ENCODE measurements at regions of chr5 and their contacts with region 1.

Region 1: DNA sequence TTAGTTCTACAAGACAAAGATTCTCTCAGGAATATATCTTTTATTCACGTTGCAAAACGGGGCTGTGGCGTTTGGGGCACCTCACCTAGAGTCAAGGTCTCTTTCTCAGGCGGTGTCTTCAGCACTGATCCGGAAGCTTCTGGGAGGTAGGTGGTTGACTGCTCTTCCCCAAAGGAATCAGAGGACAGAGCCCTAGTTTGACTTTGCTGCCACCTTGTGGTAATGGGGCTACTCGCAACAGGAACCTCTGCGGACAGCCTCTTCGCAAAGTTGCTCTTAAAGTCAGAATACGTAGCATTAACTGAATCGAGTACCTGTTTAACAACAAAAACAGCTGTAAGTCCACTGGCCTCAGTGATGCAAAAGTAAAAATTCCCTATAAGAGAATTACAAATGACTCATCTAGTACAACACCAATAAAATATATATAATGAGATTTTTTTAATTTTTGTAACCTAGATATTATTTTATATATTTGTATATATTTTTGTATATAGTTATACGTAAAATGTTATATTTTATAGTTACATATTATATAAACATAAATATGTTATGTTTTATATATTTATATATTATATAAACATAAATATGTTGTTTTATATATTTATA is 13.3 kb upstream of the GPX8 start:
- DNase-seq: peak; percentile 79
- H3K4me3 ChIP-seq: no peak overlapping the region
- H3K27ac ChIP-seq: no peak overlapping the region
- H3K4me1 ChIP-seq: no peaks in the 10 kb centered on the region
- H3K27me3 ChIP-seq: no peaks in the 10 kb centered on the region
- CTCF ChIP-seq: peak; percentile 29 to 92 (median 72)
- EP300 ChIP-seq: no peak
- POLR2A ChIP-seq: no peak

Region 2: DNA sequence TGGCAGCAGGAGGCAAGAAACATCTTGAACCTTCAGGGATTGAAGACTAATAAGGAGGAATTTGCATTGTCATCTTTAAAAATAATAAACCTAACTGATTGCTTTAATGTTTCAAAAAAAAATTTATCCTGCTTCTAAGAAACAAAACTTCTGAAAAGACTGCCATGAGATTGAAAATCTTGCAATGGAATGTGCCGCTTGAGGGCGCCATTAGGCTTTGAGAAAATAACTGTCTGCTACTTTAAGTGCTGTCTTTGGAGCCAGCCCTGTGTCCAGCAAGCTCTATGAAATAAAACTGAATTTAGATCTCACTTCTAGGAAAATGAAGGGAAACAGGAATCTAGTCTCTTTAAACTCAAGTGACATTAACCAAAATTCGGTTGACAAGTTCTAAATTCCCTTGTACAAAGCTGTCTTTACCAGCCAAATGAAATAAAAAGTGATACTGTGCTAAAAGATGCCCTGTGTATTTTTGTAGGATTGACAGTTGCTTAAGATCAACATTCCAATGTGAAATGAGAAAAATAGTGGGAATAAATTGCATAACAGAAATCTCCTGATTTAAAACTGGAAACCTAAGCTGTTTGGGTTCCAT is 240.6 kb before region 1 on chr5:
- intact Hi-C with region 1: loop called (anchors 1 kb)
- DNase-seq: peak; percentile 79
- H3K4me3 ChIP-seq: no peak overlapping the region
- H3K27ac ChIP-seq: no peak overlapping the region
- H3K4me1 ChIP-seq: no peaks in the 10 kb centered on the region
- H3K27me3 ChIP-seq: no peaks in the 10 kb centered on the region
- CTCF ChIP-seq: peak in 3 of 4 experiments; percentile 20 to 40 (median 35)
- EP300 ChIP-seq: no peak
- POLR2A ChIP-seq: no peak

Region 3: DNA sequence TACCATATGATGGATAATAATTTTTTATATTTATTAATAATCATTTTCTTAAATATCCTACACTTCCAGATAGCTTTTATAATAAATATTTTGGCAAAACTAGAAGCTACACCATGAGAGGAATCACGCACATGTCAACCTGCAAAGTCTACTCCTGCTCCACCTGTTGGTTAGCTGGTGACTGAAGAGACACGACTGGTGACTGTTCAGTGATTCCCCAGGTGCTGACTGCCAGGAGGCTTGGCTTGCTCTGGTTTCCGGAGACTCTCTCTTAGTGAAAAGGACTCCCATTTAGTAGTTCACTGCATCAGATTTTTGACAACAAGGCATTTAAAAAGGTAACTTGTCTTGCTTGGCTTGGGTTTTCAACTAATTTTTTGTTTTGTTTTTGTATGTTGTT is 23.3 kb before region 1 on chr5:
- intact Hi-C with region 1: no loop called
- DNase-seq: no peak
- H3K4me3 ChIP-seq: no peak overlapping the region
- H3K27ac ChIP-seq: no peak overlapping the region
- H3K4me1 ChIP-seq: no peaks in the 10 kb centered on the region
- H3K27me3 ChIP-seq: no peaks in the 10 kb centered on the region
- CTCF ChIP-seq: no peak
- EP300 ChIP-seq: no peak
- POLR2A ChIP-seq: no peak

Measured in sigmoid colon (tissue), 7 donors.